ENCODE measurements at regions of chr1 and their contacts with region 1.

Region 1: GRCh38 chr1:153572569-153573015 is 6.9 kb upstream of the S100A2 start:
- DNase-seq: peak; percentile 78
- H3K4me3 ChIP-seq: no peak overlapping the region
- H3K27ac ChIP-seq: peak overlapping the region; percentile 4 to 77; a peak in 3 of 4 replicates
- H3K4me1 ChIP-seq: peaks cover 12 to 15% of the 10 kb centered on the region in 2 experiments
- H3K27me3 ChIP-seq: no peaks in the 10 kb centered on the region
- CTCF ChIP-seq: peak; percentile 96
- EP300 ChIP-seq: no peak
- RAD21 ChIP-seq: peak; percentile 91

Region 2: GRCh38 chr1:153520230-153520629 is 52.4 kb before region 1 on chr1:
- CTCF ChIA-PET with region 1: interaction called, 283 read pairs
- POLR2A ChIA-PET with region 1: no interaction called
- DNase-seq: no peak
- H3K4me3 ChIP-seq: no peak overlapping the region
- H3K27ac ChIP-seq: no peak overlapping the region
- H3K4me1 ChIP-seq: peaks cover under 1 to 6% of the 10 kb centered on the region in 2 experiments; a peak in 1 of 4 replicates
- H3K27me3 ChIP-seq: no peaks in the 10 kb centered on the region
- CTCF ChIP-seq: no peak
- EP300 ChIP-seq: no peak
- RAD21 ChIP-seq: no peak

Region 3: DNA sequence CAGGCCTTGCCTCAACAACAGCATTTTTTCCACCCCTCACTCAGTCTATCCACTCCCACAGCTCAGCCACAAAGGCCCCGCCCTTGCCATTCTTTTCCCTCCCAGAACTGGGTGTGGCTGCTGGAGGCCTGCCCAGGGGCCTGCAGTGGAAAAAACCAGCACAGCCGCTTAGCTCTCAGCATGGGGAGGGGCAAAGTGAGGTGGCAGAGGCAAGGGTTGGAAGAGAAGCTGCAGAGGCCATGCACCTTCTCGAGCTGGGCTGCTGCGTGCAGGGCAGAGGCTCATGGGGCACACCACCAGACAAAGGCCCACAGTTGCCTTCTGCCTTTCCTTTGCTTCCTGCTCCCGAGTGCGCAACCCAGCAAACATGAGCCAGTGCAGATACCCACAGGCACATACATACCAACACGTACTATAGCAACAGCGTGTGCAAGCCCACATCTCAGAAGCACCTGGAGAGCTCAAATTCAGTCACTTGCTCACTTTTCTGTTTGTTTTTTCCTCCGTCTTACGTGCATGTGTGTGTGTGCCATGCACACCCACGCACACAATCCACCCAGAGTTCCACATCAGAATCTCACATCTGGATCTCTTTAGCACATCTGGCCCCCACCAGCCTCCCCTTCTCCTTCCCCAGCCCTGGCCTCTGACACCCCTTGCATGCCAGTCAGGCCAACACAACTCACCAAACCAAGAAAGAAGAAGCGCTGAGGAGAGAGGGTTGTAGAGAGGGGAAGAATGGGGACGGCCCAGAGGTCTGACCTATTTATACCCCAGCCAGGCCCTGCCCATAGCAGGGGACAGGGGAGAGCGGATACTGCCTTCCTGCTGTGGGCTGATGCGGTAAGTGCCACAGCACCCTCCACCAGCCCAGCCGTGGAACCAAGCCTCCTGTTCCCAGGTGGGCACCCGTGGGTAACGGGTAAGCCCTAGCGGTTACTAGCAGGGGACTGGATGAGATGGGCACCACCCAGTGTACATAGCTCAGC is 27.2 kb before region 1 on chr1 and contains the start of gene S100A4:
- CTCF ChIA-PET with region 1: interaction called, 62 read pairs
- POLR2A ChIA-PET with region 1: no interaction called
- DNase-seq: peak; percentile 83
- H3K4me3 ChIP-seq: no peak within 1 kb of the TSS
- H3K27ac ChIP-seq: peak within 1 kb of the TSS; percentile 72 to 76
- H3K4me1 ChIP-seq: peaks cover 58 to 65% of the 10 kb centered on the region in 2 experiments; a peak in 3 of 4 replicates
- H3K27me3 ChIP-seq: no peaks in the 10 kb centered on the region
- CTCF ChIP-seq: no peak
- EP300 ChIP-seq: peak in 1 of 2 experiments; percentile 52; a peak in 1 of 4 replicates
- RAD21 ChIP-seq: no peak
- polyA plus RNA-seq, gene S100A4: 24.6 and 25.4 TPM in 2 replicates

Region 4: DNA sequence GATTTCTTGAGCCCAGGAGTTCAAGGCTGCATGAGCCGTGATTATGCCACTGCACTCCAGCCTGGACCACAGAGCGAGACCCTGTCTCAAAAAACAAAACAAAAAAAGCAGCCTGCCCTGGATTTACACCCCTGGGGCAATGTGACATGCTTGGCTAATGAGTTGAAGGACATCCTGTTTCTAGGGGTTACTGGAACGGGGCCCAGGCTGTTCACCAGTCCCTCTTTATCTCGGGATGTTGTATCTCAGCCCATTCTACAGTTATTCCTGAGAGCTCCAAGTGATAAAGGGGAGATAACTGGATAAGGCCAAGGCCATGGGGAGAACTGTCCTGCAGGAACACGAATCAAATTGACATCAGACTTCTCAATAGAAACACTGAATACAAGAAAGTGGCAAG is 14.7 kb after region 1 on chr1:
- CTCF ChIA-PET with region 1: interaction called, 18 read pairs
- POLR2A ChIA-PET with region 1: no interaction called
- DNase-seq: peak; percentile 60
- H3K4me3 ChIP-seq: no peak overlapping the region
- H3K27ac ChIP-seq: no peak overlapping the region
- H3K4me1 ChIP-seq: peaks cover 0 to 3% of the 10 kb centered on the region in 2 experiments; a peak in 2 of 4 replicates
- H3K27me3 ChIP-seq: no peaks in the 10 kb centered on the region
- CTCF ChIP-seq: no peak
- EP300 ChIP-seq: no peak
- RAD21 ChIP-seq: no peak

Region 5: DNA sequence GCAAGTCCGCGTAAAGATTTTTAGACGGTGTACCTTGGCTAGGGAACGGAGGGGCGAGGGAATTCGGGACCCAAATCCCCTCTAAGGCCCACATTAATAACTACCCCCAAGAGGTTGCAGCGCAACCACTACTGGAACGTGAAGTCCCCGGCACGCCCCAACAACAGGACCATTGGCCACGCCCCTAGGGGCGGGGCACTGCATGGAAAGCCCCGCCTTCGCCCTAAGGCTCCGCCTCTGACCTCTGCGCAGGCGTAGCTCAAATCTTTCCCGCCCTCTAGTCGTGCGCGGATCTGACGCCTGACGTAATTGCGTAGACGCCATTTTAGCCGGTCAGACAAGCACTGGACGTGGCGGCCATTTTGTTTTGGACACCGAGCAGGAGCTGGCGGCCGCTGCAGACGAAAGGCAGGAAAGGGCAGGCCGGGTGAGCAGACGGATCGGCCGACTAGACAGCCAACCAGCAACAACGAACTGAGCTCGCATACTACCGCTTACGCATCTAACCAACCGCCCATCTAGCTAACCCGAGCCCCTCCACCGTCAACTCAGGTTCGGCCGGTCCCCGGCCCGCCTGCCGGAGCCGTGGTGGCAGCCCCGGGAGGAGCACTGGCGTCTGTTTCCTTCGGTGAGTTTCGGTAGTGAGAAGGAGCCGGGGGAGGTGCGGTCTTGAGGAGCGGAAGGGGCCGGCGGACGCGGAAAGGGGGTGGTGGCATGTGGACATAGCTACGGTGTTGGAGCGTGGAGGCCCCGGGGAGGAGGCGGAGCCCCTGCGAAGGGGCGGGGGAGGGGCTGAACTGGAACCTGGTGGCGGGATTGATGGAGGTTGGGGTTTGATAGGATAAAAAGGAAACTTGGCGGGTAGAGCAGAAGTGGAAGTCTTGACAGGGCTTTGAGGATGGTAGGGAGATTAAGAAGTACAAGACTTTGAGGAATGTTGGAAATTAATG is 61.4 kb after region 1 on chr1 and contains the start of gene CHTOP:
- CTCF ChIA-PET with region 1: interaction called, 13 read pairs
- POLR2A ChIA-PET with region 1: interaction called, 12 read pairs
- DNase-seq: peak; percentile 94
- H3K4me3 ChIP-seq: peak within 1 kb of the TSS; percentile 91 to 97
- H3K27ac ChIP-seq: peak within 1 kb of the TSS; percentile 100
- H3K4me1 ChIP-seq: no peaks in the 10 kb centered on the region; a peak in 1 of 4 replicates
- H3K27me3 ChIP-seq: no peaks in the 10 kb centered on the region
- CTCF ChIP-seq: no peak
- EP300 ChIP-seq: no peak
- RAD21 ChIP-seq: no peak
- polyA plus RNA-seq, gene CHTOP: 76.7 and 84.9 TPM in 2 replicates

Region 6: DNA sequence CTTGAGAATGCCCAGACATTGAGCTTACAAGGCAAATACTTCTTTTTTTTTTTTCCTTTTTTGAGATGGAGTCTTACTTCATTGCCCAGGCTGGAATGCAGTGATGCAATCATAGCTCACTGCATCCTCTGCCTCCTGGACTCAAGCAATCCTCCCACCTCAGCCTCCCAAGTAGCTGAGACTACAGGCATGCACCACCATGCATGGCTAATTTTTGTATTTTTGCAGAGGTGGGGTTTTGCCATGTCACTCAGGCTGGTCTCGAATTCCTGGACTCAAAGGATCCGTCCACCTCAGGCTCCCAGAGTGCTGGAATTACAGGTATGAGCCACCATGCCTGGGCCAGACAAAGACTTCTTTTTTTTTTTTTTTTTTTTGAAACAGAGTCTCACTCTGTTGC is 503.2 kb after region 1 on chr1:
- CTCF ChIA-PET with region 1: no interaction called
- POLR2A ChIA-PET with region 1: no interaction called
- DNase-seq: no peak
- H3K4me3 ChIP-seq: no peak overlapping the region
- H3K27ac ChIP-seq: no peak overlapping the region
- H3K4me1 ChIP-seq: no peaks in the 10 kb centered on the region
- H3K27me3 ChIP-seq: no peaks in the 10 kb centered on the region
- CTCF ChIP-seq: no peak
- EP300 ChIP-seq: no peak
- RAD21 ChIP-seq: no peak